HepG2 (cell line): ENCODE measurements at regions of chr3 and their contacts with region 1.

Region 1: DNA sequence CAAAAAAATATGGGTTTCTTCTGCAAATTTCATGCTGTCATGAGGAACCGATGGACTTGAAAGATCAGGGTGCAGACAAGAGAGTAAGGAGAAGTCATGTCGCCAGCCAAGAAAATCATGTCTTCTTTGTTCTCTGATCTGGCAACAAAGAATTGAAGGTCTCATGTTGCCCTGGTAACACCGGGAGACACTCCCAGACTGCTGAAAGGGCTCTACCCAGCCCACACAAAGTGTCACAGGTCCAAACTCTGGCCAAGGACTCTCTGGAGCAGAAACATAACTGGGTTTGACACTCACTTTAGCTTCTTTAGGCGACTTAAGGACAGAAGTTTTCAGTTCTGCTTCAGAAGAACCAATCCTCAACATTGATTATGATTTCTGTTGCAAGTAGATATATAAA is 42.9 kb downstream of the SIDT1 start:
- DNase-seq: no peak
- ATAC-seq: peak; percentile 59; the same call in 2 of the 3 replicates
- H3K4me3 ChIP-seq: no peak overlapping the region
- H3K27ac ChIP-seq: no peak overlapping the region
- H3K4me1 ChIP-seq: peaks cover 32% of the 10 kb centered on the region
- H3K27me3 ChIP-seq: peaks cover 0 to 1% of the 10 kb centered on the region in 2 experiments; a peak in 2 of 5 replicates
- CTCF ChIP-seq: no peak
- EP300 ChIP-seq: no peak
- POLR2A ChIP-seq: no peak
- RAD21 ChIP-seq: no peak

Region 2: DNA sequence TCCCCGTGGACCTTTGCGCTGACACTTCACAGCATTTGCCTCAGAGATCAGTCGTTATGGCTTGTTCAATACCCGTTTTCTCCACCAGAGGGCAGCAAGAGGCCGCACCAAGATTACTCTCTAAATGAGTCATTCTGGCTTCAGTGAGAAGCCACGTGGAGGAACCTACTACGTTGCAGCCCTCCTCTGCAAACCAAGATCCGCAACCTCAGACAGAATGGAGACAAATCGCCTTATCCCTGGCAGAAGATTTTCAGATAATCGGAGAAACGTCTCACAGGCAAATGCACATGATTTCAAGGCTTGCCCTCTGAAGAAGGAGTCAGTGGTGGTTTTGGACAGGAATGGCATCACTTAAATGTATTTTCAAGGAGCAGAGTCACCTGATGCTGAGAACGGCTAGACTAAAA is 523.9 kb before region 1 on chr3:
- CTCF ChIA-PET with region 1: no interaction called
- POLR2A ChIA-PET with region 1: no interaction called
- in situ Hi-C with region 1: no loop called
- intact Hi-C with region 1: loop called (anchors 5 kb)
- DNase-seq: peak; percentile 56
- ATAC-seq: peak; percentile 94
- H3K4me3 ChIP-seq: no peak overlapping the region
- H3K27ac ChIP-seq: no peak overlapping the region
- H3K4me1 ChIP-seq: peaks cover 6% of the 10 kb centered on the region; the same call in 1 of the 2 replicates
- H3K27me3 ChIP-seq: no peaks in the 10 kb centered on the region
- CTCF ChIP-seq: peak; percentile 90
- EP300 ChIP-seq: no peak
- POLR2A ChIP-seq: no peak
- RAD21 ChIP-seq: peak; percentile 87

Region 3: DNA sequence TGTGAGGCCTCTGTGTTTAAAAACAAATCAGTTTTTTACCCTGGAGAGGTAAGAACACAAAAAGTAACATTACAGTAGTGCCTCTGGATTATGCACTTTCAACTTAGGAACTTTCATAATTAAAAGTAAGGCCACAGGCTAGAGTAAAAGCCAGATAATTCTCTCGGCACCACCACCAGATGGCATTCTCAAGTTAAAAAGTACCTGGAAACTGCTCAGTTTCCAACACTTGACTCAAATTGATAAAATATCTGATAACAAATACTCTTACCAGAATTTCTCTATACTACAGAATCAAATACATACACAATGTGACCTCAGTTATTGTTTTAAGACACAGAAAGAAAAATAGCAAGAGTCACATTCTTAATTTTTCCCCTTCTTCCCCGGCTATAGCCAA is 80.2 kb before region 1 on chr3:
- CTCF ChIA-PET with region 1: interaction called, 58 read pairs
- POLR2A ChIA-PET with region 1: no interaction called
- in situ Hi-C with region 1: loop called (anchors 10 kb)
- intact Hi-C with region 1: loop called (anchors 1 kb)
- DNase-seq: peak; percentile 34
- ATAC-seq: peak; percentile 63
- H3K4me3 ChIP-seq: no peak overlapping the region
- H3K27ac ChIP-seq: no peak overlapping the region
- H3K4me1 ChIP-seq: no peaks in the 10 kb centered on the region
- H3K27me3 ChIP-seq: no peaks in the 10 kb centered on the region
- CTCF ChIP-seq: peak; percentile 54
- EP300 ChIP-seq: no peak
- POLR2A ChIP-seq: no peak
- RAD21 ChIP-seq: peak; percentile 53; the same call in 1 of the 2 replicates

Region 4: GRCh38 chr3:113514265-113514769 is 60.9 kb before region 1 on chr3:
- CTCF ChIA-PET with region 1: no interaction called
- POLR2A ChIA-PET with region 1: interaction called, 7 read pairs
- in situ Hi-C with region 1: no loop called
- intact Hi-C with region 1: loop called (anchors 5 kb)
- DNase-seq: peak; percentile 1
- ATAC-seq: peak; percentile 41
- H3K4me3 ChIP-seq: peak overlapping the region; percentile 66 to 86 (median 75)
- H3K27ac ChIP-seq: peak overlapping the region; percentile 78
- H3K4me1 ChIP-seq: peaks cover 28% of the 10 kb centered on the region
- H3K27me3 ChIP-seq: no peaks in the 10 kb centered on the region; a peak in 2 of 5 replicates
- CTCF ChIP-seq: no peak
- EP300 ChIP-seq: no peak
- POLR2A ChIP-seq: no peak
- RAD21 ChIP-seq: no peak

Region 5: GRCh38 chr3:113531826-113532697 is 43.1 kb before region 1 on chr3 and contains the start of gene SIDT1:
- CTCF ChIA-PET with region 1: interaction called, 11 read pairs
- POLR2A ChIA-PET with region 1: no interaction called
- in situ Hi-C with region 1: no loop called
- intact Hi-C with region 1: loop called (anchors 2 kb)
- DNase-seq: no peak
- ATAC-seq: peak; percentile 72
- H3K4me3 ChIP-seq: peak within 1 kb of the TSS; percentile 50 to 72 (median 61)
- H3K27ac ChIP-seq: no peak within 1 kb of the TSS
- H3K4me1 ChIP-seq: peaks cover 16% of the 10 kb centered on the region
- H3K27me3 ChIP-seq: peaks cover 1 to 44% of the 10 kb centered on the region in 2 experiments; a peak in 3 of 5 replicates
- CTCF ChIP-seq: no peak
- EP300 ChIP-seq: no peak
- POLR2A ChIP-seq: no peak
- RAD21 ChIP-seq: no peak
- total RNA-seq, gene SIDT1: 0.07 TPM in 1 of 2 replicates, not detected in the other

Region 6: DNA sequence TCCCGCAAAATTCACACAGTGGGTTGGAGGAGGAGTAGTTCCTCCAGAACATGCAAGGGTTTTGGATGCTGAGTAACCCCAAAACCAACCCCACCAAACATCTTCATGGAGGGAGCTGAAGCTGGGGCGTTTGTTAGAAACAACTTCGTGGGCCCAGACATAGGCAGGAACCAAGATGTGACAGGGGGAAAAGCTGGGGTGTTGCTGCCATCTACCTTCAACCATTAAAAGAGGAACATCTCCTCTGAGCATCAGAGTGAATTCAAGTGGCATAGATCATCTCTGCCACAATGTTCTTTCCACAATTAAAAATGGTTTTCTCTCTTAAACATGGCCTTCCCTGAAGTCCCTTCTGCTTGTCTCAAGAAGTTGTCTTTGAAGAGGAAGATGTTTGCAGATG is 22.4 kb before region 1 on chr3:
- CTCF ChIA-PET with region 1: no interaction called
- POLR2A ChIA-PET with region 1: no interaction called
- in situ Hi-C with region 1: no loop called
- intact Hi-C with region 1: loop called (anchors 2 kb)
- DNase-seq: no peak
- ATAC-seq: peak; percentile 53
- H3K4me3 ChIP-seq: no peak overlapping the region
- H3K27ac ChIP-seq: no peak overlapping the region
- H3K4me1 ChIP-seq: peaks cover 63% of the 10 kb centered on the region
- H3K27me3 ChIP-seq: no peaks in the 10 kb centered on the region; a peak in 1 of 5 replicates
- CTCF ChIP-seq: peak; percentile 59
- EP300 ChIP-seq: no peak
- POLR2A ChIP-seq: no peak
- RAD21 ChIP-seq: 0 out of 2 replicates have a peak, but pooled peaks have one; percentile 20

Region 7: DNA sequence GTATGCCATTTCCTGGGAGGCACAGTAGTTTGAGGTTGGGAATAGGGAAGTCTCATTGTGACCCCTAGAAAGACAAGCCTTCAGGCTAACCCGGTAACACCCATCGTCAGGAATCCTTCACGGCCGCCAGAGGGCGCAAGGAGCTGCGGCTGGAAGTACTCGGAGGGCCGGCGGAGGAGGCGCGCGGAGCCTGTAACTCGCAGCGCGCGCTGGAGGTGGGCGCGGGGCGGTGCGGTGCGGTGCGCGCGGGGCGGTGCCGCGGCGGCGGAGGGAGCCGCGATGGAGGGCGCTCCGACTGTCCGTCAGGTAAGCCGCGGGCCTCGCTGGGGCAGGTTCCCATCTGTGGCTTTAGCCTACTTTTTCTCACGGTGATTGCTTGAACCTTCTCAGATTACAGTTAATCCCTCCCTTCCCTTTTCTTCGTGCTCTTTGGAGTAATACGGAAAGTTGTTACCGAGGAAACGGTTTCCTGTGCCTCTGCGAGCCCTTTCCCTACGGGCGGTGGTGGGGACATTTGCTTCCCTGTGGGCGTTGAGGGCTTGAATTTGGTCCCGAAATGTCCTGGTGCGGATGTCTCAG is 263.5 kb after region 1 on chr3 and contains the start of gene GRAMD1C:
- CTCF ChIA-PET with region 1: no interaction called
- POLR2A ChIA-PET with region 1: no interaction called
- in situ Hi-C with region 1: no loop called
- intact Hi-C with region 1: no loop called
- DNase-seq: peak; percentile 72
- ATAC-seq: peak; percentile 98
- H3K4me3 ChIP-seq: peak within 1 kb of the TSS; percentile 44 to 77 (median 57)
- H3K27ac ChIP-seq: no peak within 1 kb of the TSS
- H3K4me1 ChIP-seq: peaks cover 26% of the 10 kb centered on the region
- H3K27me3 ChIP-seq: peaks cover 0 to 6% of the 10 kb centered on the region in 2 experiments; a peak in 4 of 5 replicates
- CTCF ChIP-seq: peak; percentile 90
- EP300 ChIP-seq: no peak
- POLR2A ChIP-seq: no peak
- RAD21 ChIP-seq: peak; percentile 83
- total RNA-seq, gene GRAMD1C: not detected in 2 replicates